Activated T-helper 1 cell treated with anti-CD3 and anti-CD28 coated beads, Interleukin-12 subunit alpha, Interleukin-12 subunit beta, Interleukin-2, Interleukin-4 antibody, amounts not matched to agents 30 ng/mL and 10 ng/mL and 1 ng/mL, durations not matched to agents 14 hours and 24 hours and 36 hours (primary cell): ENCODE measurements at regions of chr9 and their contacts with region 1.

Region 1: GRCh38 chr9:130940693-130941576 is 1.9 kb upstream of the FIBCD1 start:
- DNase-seq: peak; percentile 58
- H3K4me3 Mint-ChIP-seq: no peak overlapping the region
- H3K27ac Mint-ChIP-seq: no peak overlapping the region
- H3K4me1 Mint-ChIP-seq: peaks cover 4% of the 10 kb centered on the region
- H3K27me3 Mint-ChIP-seq: peaks cover 35% of the 10 kb centered on the region

Region 2: DNA sequence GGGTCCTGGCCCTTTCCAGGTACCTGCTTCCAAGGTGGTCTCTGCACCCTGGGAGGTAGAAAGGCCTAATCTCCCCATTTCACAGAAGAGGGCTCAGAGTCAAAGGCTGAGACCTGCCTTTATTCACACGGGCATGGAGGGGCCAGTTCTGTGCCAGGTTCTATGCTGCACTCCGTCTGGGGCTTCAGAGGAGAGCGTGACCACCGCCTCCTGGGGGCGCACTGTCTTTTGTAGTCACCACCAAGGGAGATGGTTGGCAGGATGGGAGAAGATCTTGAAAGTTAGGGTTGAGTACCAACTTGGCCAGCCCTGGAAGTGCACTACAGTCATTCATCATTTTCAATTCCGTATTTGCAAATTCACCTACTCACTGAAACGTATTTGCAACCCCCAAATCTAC is 300.3 kb before region 1 on chr9:
- intact Hi-C with region 1: no loop called
- DNase-seq: no peak
- H3K4me3 Mint-ChIP-seq: no peak overlapping the region
- H3K27ac Mint-ChIP-seq: no peak overlapping the region
- H3K4me1 Mint-ChIP-seq: no peaks in the 10 kb centered on the region
- H3K27me3 Mint-ChIP-seq: no peaks in the 10 kb centered on the region

Region 3: GRCh38 chr9:130663258-130663976 is 277.5 kb before region 1 on chr9:
- intact Hi-C with region 1: loop called (anchors 2 kb)
- DNase-seq: no peak
- H3K4me3 Mint-ChIP-seq: no peak overlapping the region
- H3K27ac Mint-ChIP-seq: peak overlapping the region; percentile 74
- H3K4me1 Mint-ChIP-seq: no peaks in the 10 kb centered on the region
- H3K27me3 Mint-ChIP-seq: peaks cover 63% of the 10 kb centered on the region

Region 4: DNA sequence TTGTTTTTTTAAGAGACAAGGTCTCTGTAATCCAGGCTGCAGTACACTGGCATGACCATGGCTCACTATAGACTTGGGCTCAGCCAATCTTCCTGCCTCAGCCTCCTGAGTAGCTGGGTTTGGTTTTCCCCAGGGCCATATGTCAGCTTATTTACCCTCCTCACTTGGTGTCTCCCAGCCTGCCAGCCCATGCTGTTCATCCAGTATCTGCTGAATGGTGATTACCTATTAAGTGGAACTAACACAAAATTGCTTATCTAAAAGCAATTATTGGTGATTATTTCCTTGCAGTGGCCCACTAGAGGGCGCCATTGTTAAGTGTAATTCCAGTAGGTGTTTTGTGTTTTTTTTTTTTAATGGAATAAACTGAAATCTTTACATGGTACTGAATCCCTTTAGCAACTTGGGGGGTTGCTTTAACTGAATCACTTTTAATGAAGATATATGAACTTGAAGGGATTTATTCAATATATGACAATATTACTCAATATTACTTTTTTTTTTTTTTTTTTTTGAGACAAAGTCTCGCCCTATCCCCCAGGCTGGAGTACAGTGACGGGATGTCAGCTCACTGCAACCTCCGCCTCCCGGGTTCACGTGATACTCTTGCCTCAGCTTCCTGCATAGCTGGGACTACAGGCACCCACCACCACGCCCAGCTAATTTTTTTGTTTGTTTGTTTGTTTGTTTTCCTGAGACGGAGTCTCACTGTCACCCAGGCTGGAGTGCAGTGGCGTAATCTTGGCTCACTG is 233.5 kb before region 1 on chr9:
- intact Hi-C with region 1: loop called (anchors 2 kb)
- DNase-seq: peak; percentile 52
- H3K4me3 Mint-ChIP-seq: no peak overlapping the region
- H3K27ac Mint-ChIP-seq: peak overlapping the region; percentile 56
- H3K4me1 Mint-ChIP-seq: peaks cover 3% of the 10 kb centered on the region
- H3K27me3 Mint-ChIP-seq: no peaks in the 10 kb centered on the region

Region 5: GRCh38 chr9:130770679-130771442 is 170.1 kb before region 1 on chr9:
- intact Hi-C with region 1: loop called (anchors 1 kb)
- DNase-seq: no peak
- H3K4me3 Mint-ChIP-seq: no peak overlapping the region
- H3K27ac Mint-ChIP-seq: no peak overlapping the region
- H3K4me1 Mint-ChIP-seq: peaks cover 13% of the 10 kb centered on the region
- H3K27me3 Mint-ChIP-seq: peaks cover 3% of the 10 kb centered on the region

Region 6: GRCh38 chr9:130962418-130963316 is 21.7 kb after region 1 on chr9:
- intact Hi-C with region 1: no loop called
- DNase-seq: no peak
- H3K4me3 Mint-ChIP-seq: no peak overlapping the region
- H3K27ac Mint-ChIP-seq: no peak overlapping the region
- H3K4me1 Mint-ChIP-seq: no peaks in the 10 kb centered on the region
- H3K27me3 Mint-ChIP-seq: no peaks in the 10 kb centered on the region

Region 7: GRCh38 chr9:131046581-131047202 is 105.8 kb after region 1 on chr9:
- intact Hi-C with region 1: loop called (anchors 10 kb)
- DNase-seq: peak; percentile 60
- H3K4me3 Mint-ChIP-seq: no peak overlapping the region
- H3K27ac Mint-ChIP-seq: no peak overlapping the region
- H3K4me1 Mint-ChIP-seq: no peaks in the 10 kb centered on the region
- H3K27me3 Mint-ChIP-seq: peaks cover 2% of the 10 kb centered on the region